IMR-90 (cell line): ENCODE measurements at regions of chr6 and their contacts with region 1.

Region 1: GRCh38 chr6:167849846-167850459 is 23.2 kb downstream of the AFDN start:
- DNase-seq: no peak
- ATAC-seq: peak; percentile 35; the same call in 1 of the 2 replicates
- H3K4me3 ChIP-seq: no peak overlapping the region
- H3K27ac ChIP-seq: no peak overlapping the region
- H3K4me1 ChIP-seq: peaks cover 4% of the 10 kb centered on the region
- H3K27me3 ChIP-seq: no peaks in the 10 kb centered on the region
- CTCF ChIP-seq: no peak
- POLR2A ChIP-seq: no peak
- RAD21 ChIP-seq: no peak

Region 2: GRCh38 chr6:167832497-167833395 is 17.2 kb before region 1 on chr6:
- CTCF ChIA-PET with region 1: no interaction called
- POLR2A ChIA-PET with region 1: no interaction called
- dilution Hi-C with region 1: no loop called
- in situ Hi-C with region 1: no loop called
- intact Hi-C with region 1: loop called (anchors 2 kb)
- DNase-seq: peak; percentile 33
- ATAC-seq: no peak
- H3K4me3 ChIP-seq: no peak overlapping the region
- H3K27ac ChIP-seq: no peak overlapping the region
- H3K4me1 ChIP-seq: no peaks in the 10 kb centered on the region
- H3K27me3 ChIP-seq: no peaks in the 10 kb centered on the region
- CTCF ChIP-seq: no peak
- POLR2A ChIP-seq: no peak
- RAD21 ChIP-seq: no peak